Activated CD4-positive, alpha-beta memory T cell treated with anti-CD3 and anti-CD28 coated beads for 36 hours (primary cell): ENCODE measurements at regions of chr19 and their contacts with region 1.

Region 1: GRCh38 chr19:10565567-10566407 is at the start of gene KRI1:
- DNase-seq: peak; percentile 99
- H3K4me3 Mint-ChIP-seq: peak within 1 kb of the TSS; percentile 98
- H3K27ac Mint-ChIP-seq: peak within 1 kb of the TSS; percentile 98
- H3K4me1 Mint-ChIP-seq: peaks cover 31% of the 10 kb centered on the region
- H3K27me3 Mint-ChIP-seq: no peaks in the 10 kb centered on the region
- total RNA-seq, gene KRI1: 46.2 to 52.3 TPM

Region 2: GRCh38 chr19:10106100-10106936 is 459.5 kb before region 1 on chr19 and contains the start of gene PPAN:
- CTCF ChIA-PET with region 1: no interaction called
- POLR2A ChIA-PET with region 1: no interaction called
- intact Hi-C with region 1: loop called (anchors 10 kb)
- DNase-seq: peak; percentile 99
- H3K4me3 Mint-ChIP-seq: peak within 1 kb of the TSS; percentile 88
- H3K27ac Mint-ChIP-seq: peak within 1 kb of the TSS; percentile 99
- H3K4me1 Mint-ChIP-seq: peaks cover 67% of the 10 kb centered on the region
- H3K27me3 Mint-ChIP-seq: no peaks in the 10 kb centered on the region
- total RNA-seq, gene PPAN: 99.2 to 107 TPM

Region 3: DNA sequence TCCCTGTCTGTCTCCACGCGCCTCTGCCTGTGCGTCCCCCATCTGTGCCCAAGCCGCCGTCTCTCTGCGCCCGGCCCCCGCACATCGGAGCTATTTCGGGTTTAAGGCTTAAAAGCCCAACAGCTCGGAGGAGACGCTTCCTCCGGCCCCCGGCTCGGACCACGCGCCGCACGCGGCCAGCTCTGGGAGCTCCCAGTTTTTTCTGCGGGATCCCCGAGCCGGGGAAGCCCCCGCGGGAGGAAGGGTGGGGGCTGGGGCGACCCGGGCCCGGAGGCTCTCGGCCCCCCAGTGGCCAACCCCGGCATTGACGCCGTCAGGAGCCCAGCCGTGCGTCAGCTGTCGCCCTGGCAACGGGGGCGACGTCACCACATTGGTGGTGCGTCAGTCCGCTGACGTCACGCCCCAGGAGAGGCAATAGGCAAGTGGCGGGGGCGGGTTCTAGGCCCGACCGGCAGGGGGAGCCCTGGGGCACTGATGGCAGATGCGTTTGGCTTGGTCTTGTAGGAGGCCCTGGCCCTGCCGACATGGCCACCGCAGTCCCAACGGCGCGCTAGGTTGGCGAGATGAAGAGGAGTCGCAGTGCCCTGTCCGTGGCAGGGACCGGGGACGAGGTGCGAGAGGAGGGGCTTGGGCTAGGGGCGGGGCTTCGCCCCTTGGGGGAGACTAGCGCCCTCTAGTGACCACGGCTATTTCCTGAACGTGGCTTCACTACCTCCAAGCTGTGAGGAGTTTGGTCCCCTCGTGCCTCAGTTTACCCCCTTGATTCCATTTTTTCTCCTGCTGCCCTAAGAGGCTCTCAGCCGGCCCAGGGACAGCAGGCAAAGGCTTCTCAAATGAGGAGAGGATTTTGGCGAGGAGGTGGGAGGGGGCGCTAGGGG is 149.2 kb before region 1 on chr19:
- CTCF ChIA-PET with region 1: interaction called, 5 read pairs
- POLR2A ChIA-PET with region 1: interaction called, 3 read pairs
- intact Hi-C with region 1: loop called (anchors 2 kb)
- DNase-seq: peak; percentile 96
- H3K4me3 Mint-ChIP-seq: peak overlapping the region; percentile 73
- H3K27ac Mint-ChIP-seq: peak overlapping the region; percentile 86
- H3K4me1 Mint-ChIP-seq: peaks cover 51% of the 10 kb centered on the region
- H3K27me3 Mint-ChIP-seq: peaks cover 35% of the 10 kb centered on the region

Region 4: GRCh38 chr19:10551698-10552301 is 14.0 kb before region 1 on chr19:
- CTCF ChIA-PET with region 1: interaction called, 3 read pairs
- POLR2A ChIA-PET with region 1: interaction called, 29 read pairs
- intact Hi-C with region 1: no loop called
- DNase-seq: peak; percentile 67
- H3K4me3 Mint-ChIP-seq: no peak overlapping the region
- H3K27ac Mint-ChIP-seq: no peak overlapping the region
- H3K4me1 Mint-ChIP-seq: peaks cover 33% of the 10 kb centered on the region
- H3K27me3 Mint-ChIP-seq: no peaks in the 10 kb centered on the region

Region 5: DNA sequence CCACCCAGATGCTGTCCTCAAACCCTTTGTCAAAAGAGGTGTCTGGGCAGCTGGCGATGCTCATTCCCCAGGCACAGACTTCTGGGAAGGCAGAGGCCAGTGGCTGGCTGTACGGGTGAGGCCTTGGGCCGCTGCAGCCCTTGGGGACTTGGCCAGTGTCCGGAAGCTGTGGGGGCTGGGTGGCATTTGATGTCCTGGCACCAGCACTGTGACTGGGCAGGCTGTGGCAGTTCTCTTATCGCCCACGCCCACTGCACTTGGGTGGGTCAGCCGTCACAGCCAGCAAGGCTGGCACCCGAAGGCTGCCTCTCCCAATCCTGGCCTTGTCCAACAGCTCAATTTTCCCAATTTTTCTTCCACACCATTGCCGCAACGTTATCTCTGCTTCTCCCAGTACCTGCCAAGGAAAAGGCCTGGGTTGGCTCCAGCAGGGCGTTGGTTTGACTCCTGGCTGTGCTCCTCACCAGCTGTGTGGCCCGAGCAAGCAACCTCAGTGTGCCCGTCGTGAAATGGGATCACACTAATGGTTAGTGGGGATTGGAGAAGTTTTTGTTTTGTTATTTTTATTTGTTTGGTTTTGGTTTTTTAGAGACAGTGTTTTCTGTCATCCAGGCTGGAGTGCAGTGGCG is 46.8 kb after region 1 on chr19:
- CTCF ChIA-PET with region 1: no interaction called
- POLR2A ChIA-PET with region 1: no interaction called
- intact Hi-C with region 1: no loop called
- DNase-seq: no peak
- H3K4me3 Mint-ChIP-seq: no peak overlapping the region
- H3K27ac Mint-ChIP-seq: no peak overlapping the region
- H3K4me1 Mint-ChIP-seq: peaks cover 24% of the 10 kb centered on the region
- H3K27me3 Mint-ChIP-seq: no peaks in the 10 kb centered on the region

Region 6: DNA sequence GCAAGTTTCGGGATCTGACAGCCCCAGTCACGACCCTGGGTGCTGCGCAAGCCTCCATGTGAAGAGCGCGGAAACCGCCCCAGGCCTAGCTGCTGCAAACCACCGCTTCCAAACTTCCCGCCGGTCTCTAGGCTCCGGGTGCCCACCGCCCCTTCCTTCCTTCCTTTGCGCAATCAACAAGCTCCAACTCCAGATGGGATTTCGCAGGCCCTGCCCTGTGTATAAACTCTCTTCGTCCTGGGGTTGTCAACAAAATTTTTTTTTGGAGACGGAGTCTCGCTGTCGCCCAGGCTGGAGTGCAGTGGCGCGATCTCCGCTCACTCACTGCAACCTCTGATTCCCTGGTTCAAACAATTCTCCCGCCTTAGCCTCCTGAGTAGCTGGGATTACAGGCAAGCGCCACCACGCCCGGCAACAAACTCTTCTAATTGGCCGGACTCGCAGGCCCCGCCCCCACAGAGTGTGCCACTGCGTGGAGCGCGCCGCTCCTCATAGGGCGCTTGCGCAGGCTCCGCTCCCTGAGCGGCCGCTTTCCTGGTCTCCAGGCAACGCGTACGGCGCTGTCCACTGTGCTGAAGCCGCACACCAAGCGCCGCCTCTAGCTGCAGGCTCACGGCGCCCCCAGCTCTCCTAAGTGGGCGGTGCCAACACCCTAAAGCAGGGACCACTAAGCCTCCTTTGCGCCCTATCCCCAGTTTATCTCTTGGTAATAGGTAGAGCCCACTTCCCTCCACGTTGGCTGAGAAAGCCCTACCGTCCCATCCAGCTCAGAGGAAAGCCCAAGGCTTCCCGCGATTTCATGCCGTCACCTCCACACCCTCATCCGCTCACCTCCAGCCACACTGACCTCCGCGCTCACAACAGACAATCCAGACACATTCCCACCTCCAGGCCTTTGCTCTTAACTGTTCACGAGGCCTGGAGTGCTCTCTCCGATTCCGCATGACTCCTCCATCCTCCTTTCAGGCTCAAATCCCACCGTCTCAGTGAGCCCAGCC is 129.9 kb after region 1 on chr19:
- CTCF ChIA-PET with region 1: interaction called, 45 read pairs
- POLR2A ChIA-PET with region 1: no interaction called
- intact Hi-C with region 1: loop called (anchors 5 kb)
- DNase-seq: peak; percentile 94
- H3K4me3 Mint-ChIP-seq: peak overlapping the region; percentile 59
- H3K27ac Mint-ChIP-seq: no peak overlapping the region
- H3K4me1 Mint-ChIP-seq: peaks cover 15% of the 10 kb centered on the region
- H3K27me3 Mint-ChIP-seq: peaks cover 13% of the 10 kb centered on the region

Region 7: DNA sequence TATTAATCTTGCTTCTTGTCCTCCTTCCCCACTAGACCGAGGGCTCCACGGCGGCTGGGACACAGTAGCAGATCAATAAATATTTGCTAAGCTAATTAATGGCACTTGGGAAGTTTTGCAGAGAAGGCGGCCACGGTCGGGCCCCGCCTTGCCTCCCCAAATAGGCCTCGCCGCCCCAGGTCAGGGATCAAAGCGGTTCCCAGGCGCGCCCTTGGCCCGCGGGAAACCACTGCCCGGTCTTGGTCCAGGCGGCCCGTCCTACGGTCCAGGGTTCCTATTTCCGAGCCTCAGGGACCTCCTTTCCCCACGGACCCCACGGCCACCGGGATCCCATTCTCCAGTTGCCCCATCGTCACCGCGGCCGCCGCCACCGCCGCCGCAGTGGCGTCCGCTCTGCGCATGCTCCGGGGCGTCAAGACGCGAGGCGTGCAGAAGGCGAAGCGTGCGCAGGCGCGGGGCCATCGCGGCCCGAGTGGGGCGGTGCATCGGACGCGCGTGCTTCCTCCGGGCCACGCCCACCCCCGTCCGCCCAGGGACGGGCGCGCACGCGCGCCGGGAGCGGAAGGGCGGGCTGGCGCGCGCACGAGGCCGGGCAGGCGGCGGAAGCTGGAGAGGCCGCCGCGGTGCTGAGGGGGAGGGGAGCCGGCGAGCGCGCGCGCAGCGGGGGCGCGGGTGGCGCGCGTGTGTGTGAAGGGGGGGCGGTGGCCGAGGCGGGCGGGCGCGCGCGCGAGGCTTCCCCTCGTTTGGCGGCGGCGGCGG is 394.7 kb after region 1 on chr19 and contains the start of gene SMARCA4:
- CTCF ChIA-PET with region 1: no interaction called
- POLR2A ChIA-PET with region 1: no interaction called
- intact Hi-C with region 1: loop called (anchors 5 kb)
- DNase-seq: peak; percentile 98
- H3K4me3 Mint-ChIP-seq: peak within 1 kb of the TSS; percentile 89
- H3K27ac Mint-ChIP-seq: peak within 1 kb of the TSS; percentile 86
- H3K4me1 Mint-ChIP-seq: peaks cover 44% of the 10 kb centered on the region
- H3K27me3 Mint-ChIP-seq: no peaks in the 10 kb centered on the region
- total RNA-seq, gene SMARCA4: 97.8 to 101 TPM